ENCODE measurements at regions of chr4 and their contacts with region 1.

Region 1: GRCh38 chr4:165345666-165346417 is 18.4 kb downstream of the MSMO1 start:
- DNase-seq: no peak
- ATAC-seq: peak in 1 of 2 donors; percentile 53

Region 2: DNA sequence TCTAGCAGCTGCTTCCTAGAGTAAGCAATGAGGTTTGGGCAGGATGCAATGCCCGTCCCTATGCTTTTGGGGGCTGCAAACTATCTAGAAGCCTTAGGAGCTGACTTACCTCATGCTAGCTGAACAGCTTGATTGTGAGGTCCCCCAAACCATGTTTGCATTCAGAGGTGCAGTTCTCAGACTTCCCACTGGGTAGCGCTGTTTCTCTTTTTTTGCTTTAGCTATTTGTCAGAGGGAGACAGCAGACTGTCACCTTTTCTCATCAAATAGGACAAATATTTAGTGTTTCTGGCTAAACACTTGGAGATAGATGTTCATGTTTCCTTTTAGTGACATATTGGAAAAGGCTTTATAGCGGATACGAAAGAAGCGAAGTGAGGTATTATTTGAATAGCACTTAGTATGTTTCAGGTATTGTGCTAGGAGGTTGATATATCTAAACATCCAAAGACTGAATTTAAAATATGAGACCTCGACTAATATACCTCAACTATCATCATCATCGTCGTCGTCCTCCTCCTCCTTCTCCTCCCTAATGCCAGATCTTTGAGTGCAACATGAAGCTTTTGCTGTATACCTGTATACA is 214.5 kb before region 1 on chr4:
- intact Hi-C with region 1: loop called (anchors 5 kb)
- DNase-seq: peak; percentile 40
- ATAC-seq: peak; percentile 80 to 82

Region 3: DNA sequence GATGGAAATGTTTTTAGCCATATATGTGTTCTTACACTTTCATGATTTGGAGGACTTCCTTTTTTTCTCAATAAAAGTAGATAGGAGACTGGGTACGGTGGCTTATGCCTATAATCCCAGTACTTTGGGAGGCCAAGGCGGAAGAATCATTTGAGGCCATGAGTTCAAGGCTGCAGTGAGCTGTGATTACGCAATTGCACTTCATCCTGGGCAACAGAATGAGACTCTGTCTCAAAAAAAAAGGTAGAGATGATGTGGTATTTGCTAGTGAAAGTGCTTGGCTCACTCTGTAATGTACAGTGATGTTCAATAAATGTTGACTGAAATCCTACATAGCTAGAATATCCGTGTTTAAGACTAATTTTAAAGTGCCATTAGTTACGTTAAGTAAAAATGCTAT is 111.1 kb before region 1 on chr4:
- intact Hi-C with region 1: no loop called
- DNase-seq: no peak
- ATAC-seq: no peak